Activated CD4-positive, alpha-beta T cell treated with anti-CD3 and anti-CD28 coated beads, Interleukin-2, amount 10 ng/mL, durations not matched to agents 24 days and 14 days (primary cell): ENCODE measurements at regions of chr5 and their contacts with region 1.

Region 1: DNA sequence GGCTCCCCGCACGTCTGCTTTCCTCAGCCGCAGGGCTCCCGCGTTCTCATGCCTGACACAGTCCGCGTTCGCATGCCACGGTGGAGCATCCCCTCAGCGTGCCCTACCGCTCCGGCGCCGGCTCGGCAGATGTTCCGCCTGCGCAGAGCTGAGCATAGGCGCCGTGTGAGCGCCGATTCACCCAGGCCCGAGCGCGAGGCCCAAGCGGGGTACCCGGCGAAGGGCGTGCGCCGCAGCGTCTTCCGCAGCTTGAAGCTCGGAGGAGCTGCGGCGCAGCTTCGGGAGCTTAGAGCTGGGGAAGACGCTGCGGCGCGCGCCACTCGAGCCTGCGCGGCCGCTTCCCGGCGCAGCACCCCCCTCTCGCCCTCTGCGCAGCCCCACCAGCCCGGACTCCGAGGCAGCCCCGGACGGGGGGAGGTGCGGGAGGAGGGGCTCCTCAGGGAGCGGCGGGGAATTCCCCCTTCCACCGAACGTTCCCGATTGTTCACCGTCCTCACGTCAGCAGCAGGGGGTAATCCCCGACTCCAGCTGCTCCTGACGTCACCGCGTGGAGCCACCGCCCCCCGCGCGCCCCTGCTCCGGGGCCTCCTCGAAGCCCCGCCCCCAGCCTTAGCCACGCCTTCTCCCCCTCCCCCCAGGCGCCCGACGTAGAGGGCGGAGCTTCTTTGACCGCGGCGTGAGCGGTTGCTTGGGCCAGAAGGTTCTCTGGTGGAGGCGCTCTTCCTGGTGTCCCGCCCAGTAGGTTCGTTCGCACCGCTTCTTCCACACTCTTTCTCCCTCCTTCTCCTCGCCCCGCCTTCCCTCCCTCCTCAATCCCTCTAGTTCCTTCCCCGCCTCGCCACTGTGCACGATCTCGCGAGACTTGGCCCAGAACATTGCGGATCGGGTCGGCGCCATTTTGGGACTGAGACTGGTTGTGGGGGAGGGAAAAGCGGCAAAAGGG is at the start of gene GPBP1:
- DNase-seq: peak; percentile 99
- H3K4me3 Mint-ChIP-seq: peak within 1 kb of the TSS; percentile 97
- H3K27ac Mint-ChIP-seq: peak within 1 kb of the TSS; percentile 99
- H3K4me1 Mint-ChIP-seq: peaks cover 30% of the 10 kb centered on the region
- H3K27me3 Mint-ChIP-seq: peaks cover 2% of the 10 kb centered on the region
- total RNA-seq, gene GPBP1: 85.2 and 86.7 TPM in 2 replicates

Region 2: GRCh38 chr5:56900858-56901578 is 272.4 kb before region 1 on chr5:
- intact Hi-C with region 1: loop called (anchors 2 kb)
- DNase-seq: peak; percentile 84
- H3K4me3 Mint-ChIP-seq: no peak overlapping the region
- H3K27ac Mint-ChIP-seq: no peak overlapping the region
- H3K4me1 Mint-ChIP-seq: peaks cover 2% of the 10 kb centered on the region
- H3K27me3 Mint-ChIP-seq: peaks cover 16% of the 10 kb centered on the region

Region 3: DNA sequence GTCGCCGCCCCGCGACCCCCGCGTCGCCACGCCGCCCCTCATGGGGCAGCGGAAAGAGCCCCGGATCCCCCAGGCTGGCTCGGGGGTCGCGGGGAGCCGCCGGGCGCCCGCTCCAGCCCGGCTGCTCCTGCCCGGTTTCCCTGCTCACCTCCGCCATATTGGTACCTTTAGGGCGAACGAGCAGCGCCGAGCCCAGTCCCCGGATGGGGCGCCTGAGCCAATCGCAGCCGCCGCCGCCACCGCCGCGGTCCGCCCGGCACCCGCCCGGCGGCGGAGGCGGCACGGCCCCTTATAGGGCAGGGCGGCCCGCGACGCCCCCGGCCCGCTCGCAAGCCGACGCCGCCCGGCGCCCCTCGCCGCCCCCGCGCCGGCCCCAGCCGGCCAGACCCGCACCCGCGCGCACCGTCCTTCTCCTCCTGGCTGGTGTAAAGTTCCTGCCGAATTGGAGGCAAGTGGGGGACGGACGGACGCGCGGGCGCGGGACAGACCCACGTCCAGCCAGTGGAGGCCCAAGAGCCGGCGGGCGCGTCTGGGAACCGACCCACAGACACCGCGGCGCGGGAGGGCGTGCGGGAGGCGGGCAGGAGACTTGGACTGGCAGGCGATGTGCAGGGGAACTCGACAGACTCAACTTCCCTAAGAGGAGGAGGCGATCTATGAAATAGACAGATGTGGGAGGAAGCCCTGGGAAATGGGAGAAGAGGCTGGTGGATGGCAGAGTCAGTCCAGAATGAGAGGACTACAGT is 221.3 kb before region 1 on chr5 and contains the start of gene MIER3:
- intact Hi-C with region 1: loop called (anchors 1 kb)
- DNase-seq: peak; percentile 95
- H3K4me3 Mint-ChIP-seq: peak within 1 kb of the TSS; percentile 98
- H3K27ac Mint-ChIP-seq: peak within 1 kb of the TSS; percentile 90
- H3K4me1 Mint-ChIP-seq: peaks cover 20% of the 10 kb centered on the region
- H3K27me3 Mint-ChIP-seq: peaks cover 39% of the 10 kb centered on the region
- total RNA-seq, gene MIER3: 35.4 and 37.6 TPM in 2 replicates

Region 4: DNA sequence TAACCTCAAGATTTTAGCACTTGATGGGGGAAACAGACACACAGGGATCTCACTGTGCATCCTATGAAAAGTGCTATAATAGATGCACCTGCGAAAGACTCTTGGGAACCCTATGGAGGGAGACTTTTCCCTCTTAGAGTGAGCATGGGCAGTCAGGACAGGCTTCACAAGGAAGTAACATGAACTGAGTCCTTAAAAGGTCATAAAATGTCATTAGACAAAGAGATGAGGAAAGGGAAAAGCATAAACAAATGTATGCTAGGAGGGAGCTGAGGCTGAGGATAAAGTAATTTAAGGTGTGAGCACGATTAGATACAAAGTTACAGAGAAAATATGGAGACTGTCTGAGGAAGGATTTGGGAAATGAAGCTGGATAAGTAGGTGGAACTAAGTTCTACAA is 160.9 kb before region 1 on chr5:
- intact Hi-C with region 1: no loop called
- DNase-seq: no peak
- H3K4me3 Mint-ChIP-seq: no peak overlapping the region
- H3K27ac Mint-ChIP-seq: no peak overlapping the region
- H3K4me1 Mint-ChIP-seq: no peaks in the 10 kb centered on the region
- H3K27me3 Mint-ChIP-seq: peaks cover 8% of the 10 kb centered on the region

Region 5: DNA sequence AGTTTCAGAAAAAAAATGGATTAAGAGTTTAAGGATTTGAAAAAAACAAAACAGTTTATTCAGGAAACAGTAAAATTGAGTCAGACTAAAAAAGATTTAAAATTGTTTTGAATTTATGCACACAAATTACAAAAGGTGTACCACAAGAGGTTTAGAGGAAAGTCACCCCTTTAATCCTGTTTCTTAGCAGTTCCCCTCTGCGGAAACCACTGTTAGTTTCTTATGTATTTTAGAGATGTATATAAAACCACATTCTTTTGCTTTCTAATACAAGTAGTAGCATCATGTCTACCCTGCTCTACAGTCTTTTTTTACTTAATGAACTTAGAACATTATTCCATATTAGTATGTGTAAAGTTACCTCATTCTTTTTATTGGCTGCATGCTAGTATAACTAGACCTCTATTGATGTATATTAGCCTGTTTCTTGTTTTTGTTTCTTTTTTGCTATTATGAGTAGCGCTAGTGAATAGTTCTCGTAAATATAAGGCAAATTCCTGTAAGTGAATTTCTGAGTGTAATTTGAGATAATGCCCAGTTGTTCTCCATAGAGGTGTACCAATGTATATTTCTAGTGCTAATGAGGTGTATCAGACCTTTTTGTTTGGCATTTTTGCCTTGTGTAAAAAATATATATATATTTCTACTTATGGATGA is 20.4 kb after region 1 on chr5:
- intact Hi-C with region 1: loop called (anchors 2 kb)
- DNase-seq: no peak
- H3K4me3 Mint-ChIP-seq: peak overlapping the region; percentile 57
- H3K27ac Mint-ChIP-seq: peak overlapping the region; percentile 79
- H3K4me1 Mint-ChIP-seq: peaks cover 45% of the 10 kb centered on the region
- H3K27me3 Mint-ChIP-seq: no peaks in the 10 kb centered on the region

Region 6: GRCh38 chr5:57277085-57277484 is 103.6 kb after region 1 on chr5:
- intact Hi-C with region 1: no loop called
- DNase-seq: no peak
- H3K4me3 Mint-ChIP-seq: no peak overlapping the region
- H3K27ac Mint-ChIP-seq: no peak overlapping the region
- H3K4me1 Mint-ChIP-seq: no peaks in the 10 kb centered on the region
- H3K27me3 Mint-ChIP-seq: peaks cover 11% of the 10 kb centered on the region